B cell (primary cell): ENCODE measurements at regions of chr4 and their contacts with region 1.

Region 1: GRCh38 chr4:17576932-17577665 is at the start of gene LAP3:
- DNase-seq: peak; percentile 99
- ATAC-seq: peak; percentile 89
- H3K4me3 ChIP-seq: peak within 1 kb of the TSS; percentile 71 to 95 (median 83)
- H3K4me3 Mint-ChIP-seq: peak within 1 kb of the TSS; percentile 92
- H3K27ac ChIP-seq: peak within 1 kb of the TSS; percentile 85 to 87
- H3K27ac Mint-ChIP-seq: peak within 1 kb of the TSS; percentile 96
- H3K4me1 ChIP-seq: peaks cover 13 to 25% of the 10 kb centered on the region in 2 donors
- H3K4me1 Mint-ChIP-seq: peaks cover 30% of the 10 kb centered on the region
- H3K27me3 ChIP-seq: no peaks in the 10 kb centered on the region
- H3K27me3 Mint-ChIP-seq: no peaks in the 10 kb centered on the region
- CTCF ChIP-seq: no peak
- total RNA-seq, gene LAP3: 30.1 and 33.5 TPM in 2 replicates

Region 2: GRCh38 chr4:17427991-17428390 is 149.1 kb before region 1 on chr4:
- CTCF ChIA-PET with region 1: no interaction called
- POLR2A ChIA-PET with region 1: no interaction called
- intact Hi-C with region 1: no loop called
- DNase-seq: no peak
- ATAC-seq: no peak
- H3K4me3 ChIP-seq: no peak overlapping the region
- H3K4me3 Mint-ChIP-seq: no peak overlapping the region
- H3K27ac ChIP-seq: no peak overlapping the region
- H3K27ac Mint-ChIP-seq: no peak overlapping the region
- H3K4me1 ChIP-seq: no peaks in the 10 kb centered on the region
- H3K4me1 Mint-ChIP-seq: no peaks in the 10 kb centered on the region
- H3K27me3 ChIP-seq: no peaks in the 10 kb centered on the region
- H3K27me3 Mint-ChIP-seq: peaks cover 3% of the 10 kb centered on the region
- CTCF ChIP-seq: no peak

Region 3: GRCh38 chr4:17511950-17512795 is 64.9 kb before region 1 on chr4 and contains the start of gene QDPR:
- CTCF ChIA-PET with region 1: no interaction called
- POLR2A ChIA-PET with region 1: no interaction called
- intact Hi-C with region 1: loop called (anchors 2 kb)
- DNase-seq: peak; percentile 73
- ATAC-seq: peak; percentile 94
- H3K4me3 ChIP-seq: peak within 1 kb of the TSS; percentile 48 to 79 (median 61)
- H3K4me3 Mint-ChIP-seq: peak within 1 kb of the TSS; percentile 87
- H3K27ac ChIP-seq: no peak within 1 kb of the TSS
- H3K27ac Mint-ChIP-seq: peak within 1 kb of the TSS; percentile 16
- H3K4me1 ChIP-seq: peaks cover 11 to 16% of the 10 kb centered on the region in 2 donors
- H3K4me1 Mint-ChIP-seq: peaks cover 19% of the 10 kb centered on the region
- H3K27me3 ChIP-seq: no peaks in the 10 kb centered on the region
- H3K27me3 Mint-ChIP-seq: peaks cover 19% of the 10 kb centered on the region
- CTCF ChIP-seq: no peak
- total RNA-seq, gene QDPR: 8.1 TPM in 2 replicates

Region 4: GRCh38 chr4:17597517-17597916 is 20.4 kb after region 1 on chr4:
- CTCF ChIA-PET with region 1: interaction called, 9 read pairs
- POLR2A ChIA-PET with region 1: interaction called, 5 read pairs
- intact Hi-C with region 1: loop called (anchors 1 kb)
- DNase-seq: no peak
- ATAC-seq: no peak
- H3K4me3 ChIP-seq: no peak overlapping the region
- H3K4me3 Mint-ChIP-seq: no peak overlapping the region
- H3K27ac ChIP-seq: no peak overlapping the region
- H3K27ac Mint-ChIP-seq: no peak overlapping the region
- H3K4me1 ChIP-seq: peaks cover 16 to 28% of the 10 kb centered on the region in 2 donors
- H3K4me1 Mint-ChIP-seq: peaks cover 30% of the 10 kb centered on the region
- H3K27me3 ChIP-seq: no peaks in the 10 kb centered on the region
- H3K27me3 Mint-ChIP-seq: no peaks in the 10 kb centered on the region
- CTCF ChIP-seq: no peak

Region 5: DNA sequence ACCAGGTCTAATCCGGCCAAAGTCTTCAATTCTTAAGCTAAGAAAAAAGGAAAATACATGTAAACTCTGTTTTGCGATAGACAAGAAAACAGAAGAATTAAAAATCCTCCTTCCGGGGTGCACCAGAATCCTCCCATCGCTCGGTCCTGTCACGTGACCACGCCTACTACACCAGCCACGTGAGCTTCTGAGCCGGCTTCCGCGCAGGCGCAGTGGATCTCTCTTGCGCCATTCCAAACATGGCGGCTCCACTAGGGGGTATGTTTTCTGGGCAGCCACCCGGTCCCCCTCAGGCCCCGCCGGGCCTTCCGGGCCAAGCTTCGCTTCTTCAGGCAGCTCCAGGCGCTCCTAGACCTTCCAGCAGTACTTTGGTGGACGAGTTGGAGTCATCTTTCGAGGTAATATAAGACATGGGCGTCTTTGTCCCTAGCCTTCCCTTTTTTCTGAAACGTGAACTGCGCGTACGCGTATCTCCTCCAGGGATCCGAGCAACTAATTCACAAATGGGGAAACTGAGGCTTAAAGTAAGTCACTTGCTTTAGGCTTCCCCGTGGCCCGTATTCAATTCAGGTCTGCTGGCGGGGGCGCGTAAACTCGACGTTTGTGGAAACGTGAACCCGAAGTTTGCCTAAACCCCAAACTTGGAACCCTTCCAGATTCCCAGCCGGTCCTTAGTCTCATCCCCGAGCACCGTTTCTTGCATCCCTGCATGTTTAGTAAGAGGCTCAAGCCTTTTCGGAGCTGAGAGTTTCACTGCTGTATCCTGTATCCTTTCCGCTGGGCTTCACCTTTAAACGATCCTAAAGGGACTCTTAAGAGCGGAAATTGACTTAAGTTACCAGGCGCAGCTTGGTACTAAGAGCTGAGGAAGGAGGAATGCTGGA is 37.6 kb after region 1 on chr4 and contains the start of gene MED28:
- CTCF ChIA-PET with region 1: interaction called, 6 read pairs
- POLR2A ChIA-PET with region 1: interaction called, 14 read pairs
- intact Hi-C with region 1: loop called (anchors 1 kb)
- DNase-seq: peak; percentile 96
- ATAC-seq: peak; percentile 91
- H3K4me3 ChIP-seq: peak within 1 kb of the TSS; percentile 73 to 100 (median 97)
- H3K4me3 Mint-ChIP-seq: peak within 1 kb of the TSS; percentile 100
- H3K27ac ChIP-seq: peak within 1 kb of the TSS; percentile 79 to 94
- H3K27ac Mint-ChIP-seq: peak within 1 kb of the TSS; percentile 91
- H3K4me1 ChIP-seq: peaks cover 16 to 35% of the 10 kb centered on the region in 2 donors
- H3K4me1 Mint-ChIP-seq: peaks cover 44% of the 10 kb centered on the region
- H3K27me3 ChIP-seq: no peaks in the 10 kb centered on the region
- H3K27me3 Mint-ChIP-seq: no peaks in the 10 kb centered on the region
- CTCF ChIP-seq: no peak
- total RNA-seq, gene MED28: 81.5 and 83.8 TPM in 2 replicates

Region 6: GRCh38 chr4:17630228-17630627 is 53.1 kb after region 1 on chr4:
- CTCF ChIA-PET with region 1: no interaction called
- POLR2A ChIA-PET with region 1: no interaction called
- intact Hi-C with region 1: no loop called
- DNase-seq: no peak
- ATAC-seq: no peak
- H3K4me3 ChIP-seq: no peak overlapping the region
- H3K4me3 Mint-ChIP-seq: no peak overlapping the region
- H3K27ac ChIP-seq: no peak overlapping the region
- H3K27ac Mint-ChIP-seq: no peak overlapping the region
- H3K4me1 ChIP-seq: no peaks in the 10 kb centered on the region
- H3K4me1 Mint-ChIP-seq: peaks cover 3% of the 10 kb centered on the region
- H3K27me3 ChIP-seq: no peaks in the 10 kb centered on the region
- H3K27me3 Mint-ChIP-seq: no peaks in the 10 kb centered on the region
- CTCF ChIP-seq: no peak

Region 7: DNA sequence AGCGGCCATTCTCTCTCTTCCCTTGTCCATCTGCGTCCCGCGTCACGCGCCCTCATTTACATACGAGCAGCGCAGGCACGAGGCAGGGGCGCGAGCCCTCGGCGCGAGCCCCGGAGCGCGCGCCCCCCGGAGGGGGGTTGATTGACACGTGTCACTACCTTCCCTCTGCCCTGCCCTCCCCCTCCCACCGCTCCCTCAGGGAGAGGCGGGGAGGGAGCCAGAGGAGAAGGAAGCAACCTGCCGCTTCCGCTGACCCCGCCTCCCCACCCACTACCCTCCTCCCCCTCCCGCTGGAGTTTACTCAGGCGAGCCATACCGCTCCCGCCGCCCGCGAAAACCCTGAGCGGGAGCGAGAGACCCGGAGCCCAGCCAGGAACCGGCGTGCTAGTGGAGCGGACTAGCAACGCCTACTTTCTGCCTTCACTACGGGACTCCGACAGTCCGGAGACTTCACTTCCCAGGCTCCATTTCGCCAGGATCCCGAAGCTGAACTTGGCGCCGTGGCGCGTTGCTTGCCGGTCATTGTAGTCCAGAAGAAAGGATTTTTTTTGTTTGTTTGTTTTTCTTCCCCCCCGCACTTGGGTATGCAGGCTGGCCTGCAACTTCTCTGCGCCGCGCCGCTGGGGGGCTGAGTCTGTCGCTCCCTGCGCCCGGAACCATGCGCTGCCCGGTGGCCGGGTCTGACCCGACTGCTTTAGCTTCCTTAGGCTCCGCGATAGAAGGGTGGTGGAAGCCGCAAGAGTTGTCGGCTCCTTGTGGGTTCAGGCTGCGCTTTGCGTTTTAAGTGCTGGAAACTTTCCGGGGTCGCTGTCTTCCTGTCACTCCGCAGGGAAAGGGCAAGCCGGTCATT is 444.8 kb after region 1 on chr4 and contains the start of gene LCORL:
- CTCF ChIA-PET with region 1: no interaction called
- POLR2A ChIA-PET with region 1: no interaction called
- intact Hi-C with region 1: loop called (anchors 1 kb)
- DNase-seq: peak; percentile 95
- ATAC-seq: peak; percentile 77
- H3K4me3 ChIP-seq: peak within 1 kb of the TSS; percentile 71 to 98 (median 85)
- H3K4me3 Mint-ChIP-seq: peak within 1 kb of the TSS; percentile 96
- H3K27ac ChIP-seq: peak within 1 kb of the TSS; percentile 86 to 88
- H3K27ac Mint-ChIP-seq: peak within 1 kb of the TSS; percentile 98
- H3K4me1 ChIP-seq: peaks cover 14 to 18% of the 10 kb centered on the region in 2 donors
- H3K4me1 Mint-ChIP-seq: peaks cover 22% of the 10 kb centered on the region
- H3K27me3 ChIP-seq: peaks cover 0 to 5% (median 0%) of the 10 kb centered on the region in 4 experiments
- H3K27me3 Mint-ChIP-seq: peaks cover 3% of the 10 kb centered on the region
- CTCF ChIP-seq: peak; percentile 15
- total RNA-seq, gene LCORL: 30.4 and 31.3 TPM in 2 replicates